Heart left ventricle (tissue), 16 donors: ENCODE measurements at regions of chr15 and their contacts with region 1.

Region 1: DNA sequence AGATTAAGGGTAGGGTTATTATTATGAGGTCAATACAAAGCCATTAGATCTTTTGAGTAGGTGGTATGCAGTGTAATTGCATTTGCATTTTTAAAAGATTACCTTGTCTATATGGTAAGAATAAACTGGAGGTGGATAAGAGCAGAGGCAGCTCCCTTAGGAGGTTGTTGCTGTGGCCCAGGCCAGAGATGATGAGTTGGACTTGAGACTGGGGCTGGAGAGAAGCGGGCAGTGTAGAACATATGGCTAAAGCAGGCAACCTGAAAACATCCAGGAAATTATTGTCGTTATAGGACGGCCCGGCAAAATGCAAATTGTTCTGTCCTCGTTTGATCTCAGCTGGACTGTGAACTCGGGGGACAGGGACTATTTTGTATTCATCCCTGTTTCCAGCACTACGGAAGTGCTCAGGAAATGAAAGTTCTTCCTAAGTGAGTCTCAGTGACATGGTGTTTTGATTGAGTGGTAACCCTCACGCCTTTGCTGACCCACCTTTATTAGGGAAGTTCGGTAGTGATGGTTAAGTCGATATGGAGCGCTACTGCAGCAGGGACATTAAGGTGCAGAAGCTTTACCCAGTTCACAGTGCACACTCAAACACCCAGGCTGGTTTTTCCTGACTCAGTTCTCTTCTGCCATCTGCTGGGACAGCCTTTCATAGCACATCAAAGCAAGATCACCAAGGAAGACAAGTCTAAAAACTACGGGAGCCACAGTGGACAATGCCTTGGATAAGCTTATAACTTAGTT is 27.2 kb upstream of the VPS33B start:
- DNase-seq: peak in 3 of 5 donors; percentile 39 to 51 (median 48)
- ATAC-seq: peak; percentile 47 to 93 (median 86)
- H3K4me3 ChIP-seq: no peak overlapping the region
- H3K27ac ChIP-seq: no peak overlapping the region
- H3K4me1 ChIP-seq: peaks cover 0 to 10% (median 0%) of the 10 kb centered on the region in 12 donors
- H3K27me3 ChIP-seq: peaks cover 0 to 11% (median 0%) of the 10 kb centered on the region in 9 donors
- CTCF ChIP-seq: peak; percentile 46 to 75 (median 58)
- POLR2A ChIP-seq: no peak

Region 2: DNA sequence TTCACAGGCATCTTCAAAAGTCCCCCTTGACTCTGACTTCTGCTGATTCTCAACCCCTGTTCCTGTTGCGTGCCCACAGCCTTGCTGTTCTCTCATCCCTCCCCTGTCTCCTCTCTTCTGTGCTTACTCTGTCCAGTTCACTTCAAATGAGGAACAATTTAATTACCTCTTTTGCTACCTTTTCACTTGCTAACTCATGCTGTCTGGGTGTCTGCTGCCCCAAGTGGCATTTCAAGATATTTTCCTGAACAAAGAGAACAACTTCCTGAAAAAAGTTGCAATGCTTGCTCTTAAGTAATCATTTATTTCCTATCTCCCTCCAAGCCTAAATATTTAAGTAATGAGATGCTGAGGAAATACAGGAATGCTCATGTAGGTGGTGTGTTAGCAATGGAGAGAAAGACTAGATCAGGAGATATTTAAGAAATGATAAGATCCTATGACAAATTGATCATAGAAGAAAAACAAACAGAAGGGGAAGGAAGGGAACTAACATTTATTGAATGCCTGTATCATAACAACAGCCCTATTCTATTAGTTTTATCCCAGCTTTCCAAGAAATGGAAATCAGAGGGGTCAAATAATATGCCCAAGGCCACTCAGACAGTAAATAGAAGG is 92.7 kb after region 1 on chr15:
- intact Hi-C with region 1: loop called in 1 of 10 experiments (anchors 10 kb)
- DNase-seq: no peak
- ATAC-seq: no peak
- H3K4me3 ChIP-seq: no peak overlapping the region
- H3K27ac ChIP-seq: no peak overlapping the region
- H3K4me1 ChIP-seq: no peaks in the 10 kb centered on the region
- H3K27me3 ChIP-seq: peaks cover 0 to 8% (median 0%) of the 10 kb centered on the region in 9 donors
- CTCF ChIP-seq: peak in 10 of 12 donors; percentile 23 to 51 (median 42)
- POLR2A ChIP-seq: no peak